Activated naive CD8-positive, alpha-beta T cell treated with anti-CD3 and anti-CD28 coated beads, Interleukin-2, amount 10 ng/mL, durations not matched to agents 7 days and 5 days (primary cell): ENCODE measurements at regions of chr16 and their contacts with region 1.

Region 1: GRCh38 chr16:68022704-68023522 is at the starts of genes DDX28 and DUS2:
- DNase-seq: peak; percentile 97
- ATAC-seq: peak; percentile 93
- H3K4me3 Mint-ChIP-seq: peak within 1 kb of the TSS; percentile 97
- H3K27ac Mint-ChIP-seq: peak within 1 kb of the TSS; percentile 97
- H3K4me1 Mint-ChIP-seq: peaks cover 25% of the 10 kb centered on the region
- H3K27me3 Mint-ChIP-seq: no peaks in the 10 kb centered on the region
- total RNA-seq, gene DDX28: 15.2 to 17.0 TPM
- total RNA-seq, gene DUS2: 21.1 to 25.2 TPM

Region 2: GRCh38 chr16:68005786-68006286 is 17.1 kb before region 1 on chr16:
- POLR2A ChIA-PET with region 1: interaction called, 76 read pairs
- DNase-seq: no peak
- ATAC-seq: peak; percentile 92
- H3K4me3 Mint-ChIP-seq: peak overlapping the region; percentile 4
- H3K27ac Mint-ChIP-seq: peak overlapping the region; percentile 81
- H3K4me1 Mint-ChIP-seq: peaks cover 12% of the 10 kb centered on the region
- H3K27me3 Mint-ChIP-seq: no peaks in the 10 kb centered on the region

Region 3: GRCh38 chr16:68035227-68035626 is 12.3 kb after region 1 on chr16:
- POLR2A ChIA-PET with region 1: interaction called, 18 read pairs
- DNase-seq: no peak
- ATAC-seq: no peak
- H3K4me3 Mint-ChIP-seq: no peak overlapping the region
- H3K27ac Mint-ChIP-seq: no peak overlapping the region
- H3K4me1 Mint-ChIP-seq: peaks cover 26% of the 10 kb centered on the region
- H3K27me3 Mint-ChIP-seq: no peaks in the 10 kb centered on the region

Region 4: GRCh38 chr16:68055395-68055794 is 32.5 kb after region 1 on chr16:
- POLR2A ChIA-PET with region 1: no interaction called
- DNase-seq: no peak
- ATAC-seq: no peak
- H3K4me3 Mint-ChIP-seq: no peak overlapping the region
- H3K27ac Mint-ChIP-seq: no peak overlapping the region
- H3K4me1 Mint-ChIP-seq: peaks cover 16% of the 10 kb centered on the region
- H3K27me3 Mint-ChIP-seq: no peaks in the 10 kb centered on the region